ENCODE measurements at regions of chr20 and their contacts with region 1.

Region 1: DNA sequence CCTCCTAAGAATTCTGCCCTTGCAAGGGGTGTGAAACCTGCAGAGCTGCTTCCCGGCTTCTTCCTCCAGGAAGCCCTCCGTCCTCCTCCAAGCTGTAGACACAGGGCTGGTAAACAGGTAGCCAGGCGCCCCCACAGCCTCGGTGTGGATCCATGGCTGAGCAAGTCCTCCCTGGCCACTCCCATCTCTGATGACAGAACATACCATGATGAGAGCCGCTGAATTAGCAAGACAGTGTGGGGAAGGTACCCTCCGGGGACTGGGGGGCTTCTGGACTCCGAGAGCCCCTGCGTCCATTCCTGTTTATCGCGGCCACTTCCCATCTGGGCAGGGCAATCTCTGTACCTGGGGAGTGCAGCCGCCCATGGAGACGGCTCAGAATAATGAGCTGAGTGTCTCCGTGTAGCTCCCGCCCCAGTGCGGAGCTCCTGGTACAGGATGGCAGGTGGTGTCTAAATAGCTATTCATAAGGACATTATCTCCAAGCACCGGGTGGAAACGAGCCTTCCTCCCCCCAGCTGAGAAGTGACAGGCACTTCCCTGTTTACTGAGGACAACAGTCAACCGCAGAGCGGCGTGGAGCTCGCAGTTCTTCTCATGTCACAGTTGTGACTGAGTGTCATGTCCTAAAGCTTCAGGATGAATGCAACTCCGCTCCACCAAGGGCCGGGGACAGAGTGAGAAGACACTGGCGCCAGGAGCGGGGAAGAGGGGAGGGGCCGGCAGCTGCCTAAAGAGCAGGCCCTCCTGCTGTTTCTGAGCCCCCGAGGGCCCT is 22.7 kb upstream of the NTSR1 start:
- DNase-seq: peak; percentile 32
- H3K4me3 ChIP-seq: no peak overlapping the region
- H3K27ac ChIP-seq: no peak overlapping the region
- H3K4me1 ChIP-seq: no peaks in the 10 kb centered on the region
- H3K27me3 ChIP-seq: no peaks in the 10 kb centered on the region
- CTCF ChIP-seq: no peak
- POLR2A ChIP-seq: no peak

Region 2: GRCh38 chr20:62710886-62711493 is 25.0 kb after region 1 on chr20:
- intact Hi-C with region 1: no loop called
- DNase-seq: no peak
- H3K4me3 ChIP-seq: no peak overlapping the region
- H3K27ac ChIP-seq: no peak overlapping the region
- H3K4me1 ChIP-seq: no peaks in the 10 kb centered on the region
- H3K27me3 ChIP-seq: peaks cover 36% of the 10 kb centered on the region
- CTCF ChIP-seq: no peak
- POLR2A ChIP-seq: no peak

Region 3: DNA sequence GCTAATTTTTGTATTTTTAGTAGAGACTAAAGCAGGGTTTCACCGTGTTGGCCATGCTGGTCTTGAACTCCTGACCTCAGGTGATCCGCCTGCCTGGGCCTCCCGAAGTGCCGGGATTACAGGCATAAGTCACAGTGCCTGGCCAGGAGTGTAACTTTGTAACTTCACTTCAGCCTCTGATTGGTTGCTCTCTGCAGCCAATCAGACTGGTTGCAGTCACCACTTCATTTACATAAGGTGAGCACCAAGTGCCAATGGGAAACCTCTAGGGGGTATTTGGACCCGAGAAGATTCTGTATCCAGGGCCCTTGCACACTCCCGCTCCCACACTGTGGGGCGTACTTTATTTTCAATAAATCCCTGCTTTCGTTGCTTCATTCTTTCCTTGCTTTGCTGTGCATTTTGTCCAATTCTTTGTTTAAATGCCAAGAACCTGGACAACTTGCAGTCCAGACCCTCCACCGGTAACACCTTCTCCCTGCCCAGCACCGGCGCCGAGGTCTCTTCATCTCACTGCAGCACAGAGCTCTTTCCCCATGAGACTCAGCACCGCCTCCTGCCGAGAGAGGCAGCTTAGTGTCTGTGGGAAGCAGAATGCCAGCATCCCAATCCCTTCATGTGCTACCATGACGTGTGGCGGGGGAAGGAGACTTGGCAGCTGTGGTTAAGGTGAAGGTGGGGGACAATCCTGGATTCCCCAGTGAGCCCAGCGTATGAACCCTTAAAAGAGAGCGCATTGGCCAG is 96.4 kb after region 1 on chr20:
- intact Hi-C with region 1: loop called (anchors 5 kb)
- DNase-seq: no peak
- H3K4me3 ChIP-seq: no peak overlapping the region
- H3K27ac ChIP-seq: no peak overlapping the region
- H3K4me1 ChIP-seq: no peaks in the 10 kb centered on the region
- H3K27me3 ChIP-seq: no peaks in the 10 kb centered on the region
- CTCF ChIP-seq: no peak
- POLR2A ChIP-seq: no peak